Mammary epithelial cell (primary cell): ENCODE measurements at regions of chr2 and their contacts with region 1.

Region 1: DNA sequence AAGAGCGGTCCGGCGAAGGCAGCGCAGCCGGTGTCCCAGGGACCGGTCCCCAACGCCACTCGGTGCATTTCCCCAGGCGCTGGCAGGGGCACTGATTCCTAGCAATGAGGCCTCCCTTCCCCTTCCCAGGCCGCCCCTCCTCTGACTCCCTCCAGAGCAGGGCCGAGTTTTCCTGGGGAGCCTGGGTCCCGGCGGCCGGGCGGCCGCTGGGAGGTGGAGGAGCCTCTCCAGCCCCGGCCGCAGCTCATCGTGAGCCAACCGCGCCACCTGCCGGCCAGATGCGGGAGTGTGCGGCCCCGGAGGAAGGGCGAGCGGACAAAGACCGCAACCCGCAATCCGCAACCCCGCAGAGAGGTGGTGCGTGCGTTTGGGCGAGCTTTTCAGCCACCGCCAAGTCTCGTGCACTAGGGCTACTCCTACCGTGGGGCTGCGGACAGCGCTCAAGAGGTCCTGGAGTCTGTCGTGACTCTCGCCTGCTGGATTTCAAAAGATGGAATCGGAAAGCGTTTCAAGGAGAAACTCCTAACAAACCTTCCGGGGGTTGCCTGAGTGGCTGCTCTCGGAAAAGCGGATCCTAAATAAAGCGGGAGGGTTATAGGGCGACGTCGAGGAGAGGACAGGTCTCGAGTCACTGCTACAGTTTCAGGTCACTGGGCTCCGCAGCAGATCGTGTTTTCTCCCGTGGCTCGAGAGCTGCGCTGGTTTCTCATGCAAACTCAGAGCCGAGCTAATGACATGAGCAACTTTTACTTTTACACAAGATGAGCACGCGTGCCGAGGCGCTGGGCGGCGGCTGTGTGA is 1.5 kb upstream of the EPHA4 start:
- DNase-seq: peak; percentile 69
- H3K4me3 ChIP-seq: peak overlapping the region; percentile 67 to 78 (median 71)
- H3K27ac ChIP-seq: no peak overlapping the region
- H3K4me1 ChIP-seq: peaks cover 19% of the 10 kb centered on the region
- H3K27me3 ChIP-seq: peaks cover 2% of the 10 kb centered on the region
- CTCF ChIP-seq: peak; percentile 65 to 95

Region 2: GRCh38 chr2:219997341-219997851 is 1576.2 kb before region 1 on chr2:
- CTCF ChIA-PET with region 1: interaction called, 3 read pairs
- dilution Hi-C with region 1: no loop called
- in situ Hi-C with region 1: no loop called
- intact Hi-C with region 1: loop called (anchors 1 kb)
- DNase-seq: peak; percentile 11
- H3K4me3 ChIP-seq: no peak overlapping the region
- H3K27ac ChIP-seq: no peak overlapping the region
- H3K4me1 ChIP-seq: no peaks in the 10 kb centered on the region
- H3K27me3 ChIP-seq: no peaks in the 10 kb centered on the region
- CTCF ChIP-seq: peak; percentile 46 to 65

Region 3: DNA sequence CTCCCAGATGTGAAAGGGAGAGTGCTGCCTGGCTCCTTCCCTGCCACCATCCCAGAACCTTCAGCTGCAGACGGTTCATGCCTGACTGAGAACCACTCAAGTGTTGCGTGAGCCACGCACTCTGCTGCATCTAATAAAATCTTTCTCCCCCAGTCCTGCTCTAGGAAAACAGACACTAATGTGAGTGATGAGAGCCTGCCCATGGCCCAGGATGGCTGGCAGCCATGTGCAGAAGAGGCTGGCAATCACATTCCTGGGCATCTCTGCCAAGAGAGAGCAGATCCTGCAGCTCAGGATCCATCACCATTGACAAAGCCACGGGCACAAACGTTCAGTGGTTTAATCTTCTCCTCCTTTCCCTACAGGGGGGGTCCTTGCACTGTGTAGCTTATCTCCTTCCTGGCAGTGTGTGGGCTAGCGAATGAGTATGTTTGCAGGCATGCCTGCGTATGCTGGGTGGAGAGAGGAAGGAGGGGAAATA is 1468.7 kb before region 1 on chr2:
- CTCF ChIA-PET with region 1: no interaction called
- dilution Hi-C with region 1: no loop called
- in situ Hi-C with region 1: no loop called
- intact Hi-C with region 1: loop called (anchors 1 kb)
- DNase-seq: peak; percentile 63
- H3K4me3 ChIP-seq: no peak overlapping the region
- H3K27ac ChIP-seq: no peak overlapping the region
- H3K4me1 ChIP-seq: no peaks in the 10 kb centered on the region
- H3K27me3 ChIP-seq: no peaks in the 10 kb centered on the region
- CTCF ChIP-seq: peak; percentile 37 to 47

Region 4: GRCh38 chr2:220891405-220891804 is 682.2 kb before region 1 on chr2:
- CTCF ChIA-PET with region 1: no interaction called
- dilution Hi-C with region 1: no loop called
- in situ Hi-C with region 1: no loop called
- intact Hi-C with region 1: loop called (anchors 5 kb)
- DNase-seq: peak; percentile 74
- H3K4me3 ChIP-seq: no peak overlapping the region
- H3K27ac ChIP-seq: no peak overlapping the region
- H3K4me1 ChIP-seq: no peaks in the 10 kb centered on the region
- H3K27me3 ChIP-seq: no peaks in the 10 kb centered on the region
- CTCF ChIP-seq: no peak

Region 5: GRCh38 chr2:221318376-221319130 is 255.1 kb before region 1 on chr2:
- CTCF ChIA-PET with region 1: no interaction called
- dilution Hi-C with region 1: no loop called
- in situ Hi-C with region 1: no loop called
- intact Hi-C with region 1: loop called (anchors 10 kb)
- DNase-seq: no peak
- H3K4me3 ChIP-seq: no peak overlapping the region
- H3K27ac ChIP-seq: no peak overlapping the region
- H3K4me1 ChIP-seq: no peaks in the 10 kb centered on the region
- H3K27me3 ChIP-seq: no peaks in the 10 kb centered on the region
- CTCF ChIP-seq: no peak

Region 6: GRCh38 chr2:221478485-221478863 is 95.2 kb before region 1 on chr2:
- CTCF ChIA-PET with region 1: interaction called, 3 read pairs
- dilution Hi-C with region 1: no loop called
- in situ Hi-C with region 1: no loop called
- intact Hi-C with region 1: loop called (anchors 5 kb)
- DNase-seq: no peak
- H3K4me3 ChIP-seq: no peak overlapping the region
- H3K27ac ChIP-seq: no peak overlapping the region
- H3K4me1 ChIP-seq: peaks cover 8% of the 10 kb centered on the region
- H3K27me3 ChIP-seq: no peaks in the 10 kb centered on the region
- CTCF ChIP-seq: peak in 1 of 2 donors; percentile 15

Region 7: GRCh38 chr2:221606424-221606823 is 32.8 kb after region 1 on chr2:
- CTCF ChIA-PET with region 1: no interaction called
- dilution Hi-C with region 1: no loop called
- in situ Hi-C with region 1: no loop called
- intact Hi-C with region 1: no loop called
- DNase-seq: no peak
- H3K4me3 ChIP-seq: no peak overlapping the region
- H3K27ac ChIP-seq: no peak overlapping the region
- H3K4me1 ChIP-seq: no peaks in the 10 kb centered on the region
- H3K27me3 ChIP-seq: no peaks in the 10 kb centered on the region
- CTCF ChIP-seq: no peak